H1 (cell line): ENCODE measurements at regions of chr5 and their contacts with region 1.

Region 1: GRCh38 chr5:59351076-59351794 is 542.3 kb downstream of the PDE4D start:
- DNase-seq: no peak
- H3K4me3 ChIP-seq: no peak overlapping the region
- H3K27ac ChIP-seq: no peak overlapping the region
- H3K4me1 ChIP-seq: no peaks in the 10 kb centered on the region; a peak in 1 of 7 replicates
- H3K27me3 ChIP-seq: no peaks in the 10 kb centered on the region
- CTCF ChIP-seq: no peak
- EP300 ChIP-seq: no peak
- POLR2A ChIP-seq: no peak
- RAD21 ChIP-seq: no peak

Region 2: DNA sequence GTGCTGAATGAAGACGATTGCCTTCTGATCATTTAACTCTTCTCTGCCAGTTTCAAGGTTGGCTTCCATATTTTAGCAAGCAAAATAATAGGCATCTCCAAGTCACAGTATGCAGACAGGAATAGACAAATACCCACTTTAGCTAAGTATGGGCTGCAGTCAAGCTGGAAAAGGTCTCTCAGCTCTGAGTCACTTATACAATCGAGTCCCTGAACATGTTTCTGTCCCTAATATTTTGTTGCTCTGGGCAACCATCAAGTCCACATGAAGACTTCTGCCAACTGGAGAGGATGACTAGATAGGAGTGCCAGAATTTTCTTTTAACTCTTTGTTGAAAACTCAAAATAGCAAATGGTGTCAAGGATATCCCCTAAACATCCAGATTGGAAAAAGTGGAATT is 193.1 kb before region 1 on chr5:
- CTCF ChIA-PET with region 1: no interaction called
- POLR2A ChIA-PET with region 1: no interaction called
- DNase-seq: no peak
- H3K4me3 ChIP-seq: no peak overlapping the region
- H3K27ac ChIP-seq: no peak overlapping the region
- H3K4me1 ChIP-seq: peaks cover 0 to 2% (median 1%) of the 10 kb centered on the region in 4 experiments; a peak in 1 of 7 replicates
- H3K27me3 ChIP-seq: no peaks in the 10 kb centered on the region
- CTCF ChIP-seq: no peak
- EP300 ChIP-seq: no peak
- POLR2A ChIP-seq: no peak
- RAD21 ChIP-seq: no peak

Region 3: DNA sequence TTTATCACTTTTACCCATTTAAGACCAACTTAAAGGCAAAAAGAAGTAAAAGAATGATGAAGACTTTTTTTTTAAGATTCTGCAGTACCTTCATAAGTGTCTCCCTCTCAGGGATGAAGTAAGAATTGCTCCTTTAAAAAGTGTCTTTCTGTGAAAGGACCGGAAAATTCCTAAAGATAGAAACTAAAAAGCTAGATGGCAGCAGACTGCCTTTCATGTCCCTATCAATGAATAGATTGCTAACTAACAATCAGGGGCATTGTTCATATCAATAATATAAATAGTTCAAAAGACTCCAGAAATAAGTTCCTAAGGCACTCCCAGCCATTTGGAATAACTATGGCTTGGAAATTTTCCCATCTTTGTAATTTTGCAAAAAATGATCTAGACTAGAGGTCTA is 15.7 kb before region 1 on chr5:
- CTCF ChIA-PET with region 1: interaction called, 26 read pairs
- POLR2A ChIA-PET with region 1: no interaction called
- DNase-seq: no peak
- H3K4me3 ChIP-seq: no peak overlapping the region
- H3K27ac ChIP-seq: no peak overlapping the region
- H3K4me1 ChIP-seq: no peaks in the 10 kb centered on the region
- H3K27me3 ChIP-seq: no peaks in the 10 kb centered on the region
- CTCF ChIP-seq: peak in 2 of 3 experiments; percentile 33 to 39; a peak in 2 of 4 replicates
- EP300 ChIP-seq: no peak
- POLR2A ChIP-seq: no peak
- RAD21 ChIP-seq: peak; percentile 27 to 32; a peak in 3 of 4 replicates